ENCODE measurements at regions of chr14 and their contacts with region 1.

Region 1: GRCh38 chr14:67487937-67488893 is at the start of gene TMEM229B:
- DNase-seq: peak; percentile 44 to 87 (median 74)
- ATAC-seq: peak; percentile 98 to 99
- H3K4me3 Mint-ChIP-seq: peak within 1 kb of the TSS; percentile 89 to 100 (median 98)
- H3K27ac Mint-ChIP-seq: peak within 1 kb of the TSS; percentile 97 to 100 (median 100)
- H3K4me1 Mint-ChIP-seq: peaks cover 26 to 90% (median 85%) of the 10 kb centered on the region in 4 donors
- H3K27me3 Mint-ChIP-seq: no peaks in the 10 kb centered on the region
- polyA plus RNA-seq, gene TMEM229B: 17.2 to 27.5 (median 17.3) TPM

Region 2: DNA sequence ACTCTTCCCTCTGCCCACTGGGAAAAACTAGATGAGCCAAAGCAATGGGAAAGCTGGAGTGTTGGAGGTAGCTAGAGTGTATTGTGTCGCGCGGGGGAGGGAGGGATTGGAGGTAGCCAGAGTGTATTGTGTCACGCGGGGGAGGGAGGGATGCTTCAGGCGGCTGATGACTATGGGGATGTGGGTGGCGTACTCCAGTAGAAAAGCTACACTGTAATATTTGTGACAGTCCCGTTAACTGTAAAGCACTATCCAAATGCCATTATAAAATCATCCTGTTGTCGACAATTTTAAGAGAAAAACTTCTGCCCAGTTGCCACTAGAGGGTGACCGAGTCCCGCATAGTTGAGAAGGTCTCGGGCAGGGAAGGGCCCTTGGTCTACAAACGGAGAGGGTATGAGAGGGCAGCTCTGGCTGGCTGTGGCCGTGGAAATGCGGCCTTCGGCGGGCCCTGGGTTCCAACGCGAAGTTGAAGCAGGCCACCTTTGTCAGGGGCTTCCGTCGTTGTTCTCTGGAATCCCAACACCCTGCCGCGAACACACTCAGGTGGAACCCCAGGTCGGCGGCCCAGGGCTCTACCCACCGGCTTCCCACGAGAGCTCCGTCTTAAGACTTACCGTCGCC is 61.1 kb before region 1 on chr14:
- POLR2A ChIA-PET with region 1: no interaction called
- DNase-seq: peak; percentile 55 to 88 (median 72)
- ATAC-seq: peak; percentile 90 to 97
- H3K4me3 Mint-ChIP-seq: peak overlapping the region in 1 of 10 donors; percentile 28
- H3K27ac Mint-ChIP-seq: peak overlapping the region in 3 of 10 donors; percentile 39 to 69 (median 62)
- H3K4me1 Mint-ChIP-seq: peaks cover 0 to 4% (median 0%) of the 10 kb centered on the region in 4 donors
- H3K27me3 Mint-ChIP-seq: peaks cover 3 to 27% (median 13%) of the 10 kb centered on the region in 5 donors

Region 3: GRCh38 chr14:67467179-67468080 is 20.8 kb before region 1 on chr14:
- POLR2A ChIA-PET with region 1: interaction called, 41 read pairs
- DNase-seq: peak in 3 of 10 donors; percentile 24 to 26 (median 25)
- ATAC-seq: peak in 1 of 2 donors; percentile 44
- H3K4me3 Mint-ChIP-seq: peak overlapping the region in 8 of 10 donors; percentile 26 to 68 (median 52)
- H3K27ac Mint-ChIP-seq: peak overlapping the region in 8 of 10 donors; percentile 28 to 79 (median 59)
- H3K4me1 Mint-ChIP-seq: peaks cover 34 to 60% (median 49%) of the 10 kb centered on the region in 4 donors
- H3K27me3 Mint-ChIP-seq: no peaks in the 10 kb centered on the region

Region 4: DNA sequence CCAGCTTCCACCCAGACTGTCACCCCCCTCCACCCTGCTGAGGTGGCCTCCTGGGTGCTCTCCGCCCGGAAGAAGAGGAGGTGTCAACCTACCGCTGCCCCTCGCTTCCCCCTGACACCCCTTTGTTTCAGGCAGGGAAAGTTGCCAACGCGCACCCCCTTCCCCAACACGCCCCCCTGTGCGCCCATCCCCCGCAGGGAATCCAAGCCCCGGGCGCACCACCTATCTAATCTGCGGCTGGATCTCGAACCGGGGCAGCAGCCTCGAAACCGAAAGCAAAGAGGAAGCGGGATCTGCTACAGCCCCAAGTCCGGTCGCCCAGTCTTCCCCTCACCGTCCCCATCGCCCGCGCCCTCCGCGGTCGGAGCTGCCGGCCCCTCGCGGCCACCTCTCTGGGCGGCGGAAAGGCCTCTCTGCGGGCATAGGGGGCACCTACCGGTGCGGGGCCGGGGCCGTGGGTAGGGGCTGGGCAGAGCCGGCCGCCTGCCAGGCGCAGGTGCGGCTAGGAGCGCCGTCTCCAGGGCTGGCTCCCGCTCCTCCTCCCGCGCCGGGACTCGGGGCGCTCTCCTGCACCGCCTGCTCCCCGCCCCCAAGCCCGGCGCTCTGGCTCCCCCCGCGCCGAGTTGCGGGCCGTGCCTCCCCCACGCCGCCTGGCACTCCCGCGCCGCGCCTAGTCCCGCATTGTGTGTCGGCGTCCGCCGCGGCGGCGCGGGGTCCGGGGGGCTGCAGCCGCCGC is 26.6 kb after region 1 on chr14:
- POLR2A ChIA-PET with region 1: interaction called, 32 read pairs
- DNase-seq: peak; percentile 12 to 73 (median 50)
- ATAC-seq: peak; percentile 72 to 74
- H3K4me3 Mint-ChIP-seq: peak overlapping the region; percentile 86 to 96 (median 92)
- H3K27ac Mint-ChIP-seq: peak overlapping the region; percentile 88 to 95 (median 93)
- H3K4me1 Mint-ChIP-seq: peaks cover 15 to 47% (median 40%) of the 10 kb centered on the region in 4 donors
- H3K27me3 Mint-ChIP-seq: peaks cover 0 to 4% (median 0%) of the 10 kb centered on the region in 5 donors

Region 5: GRCh38 chr14:67526676-67527459 is 38.7 kb after region 1 on chr14:
- POLR2A ChIA-PET with region 1: no interaction called
- DNase-seq: peak in 6 of 10 donors; percentile 12 to 47 (median 25)
- ATAC-seq: peak; percentile 74 to 89
- H3K4me3 Mint-ChIP-seq: no peak overlapping the region
- H3K27ac Mint-ChIP-seq: peak overlapping the region in 1 of 10 donors; percentile 69
- H3K4me1 Mint-ChIP-seq: peaks cover 2 to 6% (median 2%) of the 10 kb centered on the region in 4 donors
- H3K27me3 Mint-ChIP-seq: peaks cover 8 to 30% (median 12%) of the 10 kb centered on the region in 5 donors

Region 6: GRCh38 chr14:67831113-67831512 is 342.9 kb after region 1 on chr14:
- POLR2A ChIA-PET with region 1: no interaction called
- DNase-seq: no peak
- ATAC-seq: no peak
- H3K4me3 Mint-ChIP-seq: no peak overlapping the region
- H3K27ac Mint-ChIP-seq: no peak overlapping the region
- H3K4me1 Mint-ChIP-seq: peaks cover 0 to 7% (median 0%) of the 10 kb centered on the region in 4 donors
- H3K27me3 Mint-ChIP-seq: no peaks in the 10 kb centered on the region

Region 7: DNA sequence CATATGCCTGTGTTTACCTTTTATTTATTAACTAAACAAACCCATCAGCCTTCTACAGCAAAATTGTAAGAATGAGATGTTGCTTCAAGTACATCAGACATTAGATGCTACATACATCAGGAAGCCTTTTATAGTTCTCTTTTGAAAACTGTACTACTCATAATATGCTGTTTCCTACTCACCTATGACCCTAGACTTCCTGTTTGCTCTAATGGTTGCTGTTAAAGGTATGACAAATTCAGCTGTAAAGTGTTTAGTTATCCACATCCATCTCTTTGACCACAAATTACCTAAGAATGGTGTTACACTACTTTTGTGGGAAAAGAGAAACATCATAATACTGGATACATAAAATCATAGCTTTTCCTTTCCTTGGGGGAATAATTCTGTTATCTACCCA is 551.4 kb after region 1 on chr14:
- POLR2A ChIA-PET with region 1: no interaction called
- DNase-seq: no peak
- ATAC-seq: no peak
- H3K4me3 Mint-ChIP-seq: no peak overlapping the region
- H3K27ac Mint-ChIP-seq: no peak overlapping the region
- H3K4me1 Mint-ChIP-seq: peaks cover 0 to 6% (median 2%) of the 10 kb centered on the region in 4 donors
- H3K27me3 Mint-ChIP-seq: no peaks in the 10 kb centered on the region

Measured in naive thymus-derived CD8-positive, alpha-beta T cell (primary cell).